Posterior vena cava (tissue), 2 donors: ENCODE measurements at regions of chr12 and their contacts with region 1.

Region 1: GRCh38 chr12:49515266-49515665 is 23.6 kb upstream of the KCNH3 start:
- DNase-seq: no peak

Region 2: GRCh38 chr12:49336645-49337584 is 178.4 kb before region 1 on chr12 and contains the start of gene C1QL4:
- intact Hi-C with region 1: loop called in 1 of 2 experiments (anchors 10 kb)
- DNase-seq: peak; percentile 95
- total RNA-seq, gene C1QL4: not detected

Region 3: GRCh38 chr12:49358483-49359141 is 156.7 kb before region 1 on chr12:
- intact Hi-C with region 1: loop called (anchors 5 to 10 kb)
- DNase-seq: peak; percentile 29

Region 4: GRCh38 chr12:49366652-49367380 is 148.4 kb before region 1 on chr12:
- intact Hi-C with region 1: loop called in 1 of 2 experiments (anchors 10 kb)
- DNase-seq: peak; percentile 96

Region 5: GRCh38 chr12:49489720-49490119 is 25.5 kb before region 1 on chr12:
- intact Hi-C with region 1: no loop called
- DNase-seq: no peak